ENCODE measurements at regions of chr3 and their contacts with region 1.

Region 1: GRCh38 chr3:129120254-129121004 is 1.2 kb downstream of the RAB43 start:
- DNase-seq: peak; percentile 90
- ATAC-seq: peak; percentile 31
- H3K4me3 ChIP-seq: peak overlapping the region; percentile 65 to 83 (median 81)
- H3K27ac ChIP-seq: peak overlapping the region; percentile 81
- H3K4me1 ChIP-seq: peaks cover 55% of the 10 kb centered on the region
- H3K27me3 ChIP-seq: no peaks in the 10 kb centered on the region; a peak in 1 of 5 replicates
- CTCF ChIP-seq: no peak; the same call in 1 of the 2 replicates
- EP300 ChIP-seq: peak in 1 of 2 experiments; percentile 26; a peak in 1 of 4 replicates
- POLR2A ChIP-seq: peak; percentile 49 to 63; a peak in 3 of 4 replicates
- RAD21 ChIP-seq: no peak

Region 2: GRCh38 chr3:127848131-127849129 is 1272.0 kb before region 1 on chr3:
- CTCF ChIA-PET with region 1: no interaction called
- POLR2A ChIA-PET with region 1: no interaction called
- in situ Hi-C with region 1: no loop called
- intact Hi-C with region 1: no loop called
- DNase-seq: no peak
- ATAC-seq: peak; percentile 55; the same call in 1 of the 3 replicates
- H3K4me3 ChIP-seq: no peak overlapping the region
- H3K27ac ChIP-seq: no peak overlapping the region
- H3K4me1 ChIP-seq: no peaks in the 10 kb centered on the region
- H3K27me3 ChIP-seq: peaks cover 0 to 14% of the 10 kb centered on the region in 2 experiments; a peak in 1 of 5 replicates
- CTCF ChIP-seq: no peak
- EP300 ChIP-seq: no peak
- POLR2A ChIP-seq: no peak
- RAD21 ChIP-seq: no peak

Region 3: DNA sequence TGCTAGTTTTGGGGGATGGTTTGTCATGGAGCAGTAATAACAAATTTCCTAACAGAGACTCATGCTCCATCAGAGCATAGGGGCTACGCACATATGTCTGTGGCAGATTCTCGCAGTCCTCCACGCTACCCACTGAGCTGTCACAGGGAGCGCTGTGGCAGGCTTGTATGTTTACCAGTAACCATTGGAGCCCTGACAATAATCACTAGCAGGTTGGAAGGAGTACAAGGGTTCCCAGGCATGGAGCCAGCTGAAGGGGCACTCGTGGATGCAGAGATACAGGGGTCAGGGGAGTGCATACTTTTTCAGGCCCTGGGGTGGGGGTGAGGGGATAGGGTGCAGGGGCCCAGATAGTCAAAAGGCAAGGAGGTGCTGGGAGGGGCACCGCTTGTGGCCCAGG is 67.8 kb before region 1 on chr3:
- CTCF ChIA-PET with region 1: no interaction called
- POLR2A ChIA-PET with region 1: interaction called, 10 read pairs
- in situ Hi-C with region 1: no loop called
- intact Hi-C with region 1: loop called (anchors 5 kb)
- DNase-seq: no peak
- ATAC-seq: no peak
- H3K4me3 ChIP-seq: no peak overlapping the region
- H3K27ac ChIP-seq: no peak overlapping the region
- H3K4me1 ChIP-seq: peaks cover 52% of the 10 kb centered on the region
- H3K27me3 ChIP-seq: 0 out of 5 replicates have a peak, but pooled peaks cover 0 to 9% of the 10 kb centered on the region in 2 experiments
- CTCF ChIP-seq: no peak
- EP300 ChIP-seq: no peak
- POLR2A ChIP-seq: no peak
- RAD21 ChIP-seq: no peak

Region 4: DNA sequence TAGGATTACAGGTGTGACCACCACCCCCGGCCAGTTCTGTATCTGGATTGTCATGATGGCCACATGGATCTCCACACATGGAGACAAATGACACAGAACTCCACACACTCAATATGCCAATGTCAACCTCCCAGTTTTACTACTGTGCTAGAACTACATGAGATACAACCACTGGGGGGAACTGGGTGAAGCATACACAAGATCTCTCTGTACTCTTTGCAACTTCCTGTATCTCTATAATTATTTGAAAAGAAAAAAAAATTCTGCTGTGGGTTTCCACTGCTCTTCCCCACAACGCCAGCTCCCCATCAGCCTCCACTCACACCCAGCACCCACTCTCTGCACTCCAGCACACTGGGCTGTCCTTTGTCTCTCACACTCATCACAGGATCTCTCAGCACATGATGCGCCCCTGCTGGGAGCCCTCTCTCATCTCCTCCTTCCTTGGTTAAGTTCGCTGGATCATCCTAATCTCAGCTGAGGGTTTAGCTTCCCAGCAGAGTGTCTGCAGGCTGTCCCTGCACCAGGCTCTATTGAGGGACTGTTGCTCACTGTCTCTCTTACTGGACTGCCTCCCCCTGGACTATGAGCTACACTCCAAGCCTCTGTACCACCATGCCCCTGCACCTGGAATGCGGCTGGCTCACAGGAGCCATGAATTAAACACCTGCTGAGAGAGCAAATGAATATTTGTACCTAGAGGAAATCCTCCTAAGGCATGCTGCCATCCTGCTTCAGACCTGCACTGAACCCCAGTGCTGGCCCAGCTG is 11.9 kb after region 1 on chr3:
- CTCF ChIA-PET with region 1: no interaction called
- POLR2A ChIA-PET with region 1: interaction called, 22 read pairs
- in situ Hi-C with region 1: no loop called
- intact Hi-C with region 1: no loop called
- DNase-seq: no peak
- ATAC-seq: 0 out of 3 replicates have a peak, but pooled peaks have one; percentile 23
- H3K4me3 ChIP-seq: no peak overlapping the region
- H3K27ac ChIP-seq: no peak overlapping the region
- H3K4me1 ChIP-seq: no peaks in the 10 kb centered on the region
- H3K27me3 ChIP-seq: no peaks in the 10 kb centered on the region
- CTCF ChIP-seq: no peak
- EP300 ChIP-seq: no peak
- POLR2A ChIP-seq: no peak
- RAD21 ChIP-seq: no peak

Region 5: DNA sequence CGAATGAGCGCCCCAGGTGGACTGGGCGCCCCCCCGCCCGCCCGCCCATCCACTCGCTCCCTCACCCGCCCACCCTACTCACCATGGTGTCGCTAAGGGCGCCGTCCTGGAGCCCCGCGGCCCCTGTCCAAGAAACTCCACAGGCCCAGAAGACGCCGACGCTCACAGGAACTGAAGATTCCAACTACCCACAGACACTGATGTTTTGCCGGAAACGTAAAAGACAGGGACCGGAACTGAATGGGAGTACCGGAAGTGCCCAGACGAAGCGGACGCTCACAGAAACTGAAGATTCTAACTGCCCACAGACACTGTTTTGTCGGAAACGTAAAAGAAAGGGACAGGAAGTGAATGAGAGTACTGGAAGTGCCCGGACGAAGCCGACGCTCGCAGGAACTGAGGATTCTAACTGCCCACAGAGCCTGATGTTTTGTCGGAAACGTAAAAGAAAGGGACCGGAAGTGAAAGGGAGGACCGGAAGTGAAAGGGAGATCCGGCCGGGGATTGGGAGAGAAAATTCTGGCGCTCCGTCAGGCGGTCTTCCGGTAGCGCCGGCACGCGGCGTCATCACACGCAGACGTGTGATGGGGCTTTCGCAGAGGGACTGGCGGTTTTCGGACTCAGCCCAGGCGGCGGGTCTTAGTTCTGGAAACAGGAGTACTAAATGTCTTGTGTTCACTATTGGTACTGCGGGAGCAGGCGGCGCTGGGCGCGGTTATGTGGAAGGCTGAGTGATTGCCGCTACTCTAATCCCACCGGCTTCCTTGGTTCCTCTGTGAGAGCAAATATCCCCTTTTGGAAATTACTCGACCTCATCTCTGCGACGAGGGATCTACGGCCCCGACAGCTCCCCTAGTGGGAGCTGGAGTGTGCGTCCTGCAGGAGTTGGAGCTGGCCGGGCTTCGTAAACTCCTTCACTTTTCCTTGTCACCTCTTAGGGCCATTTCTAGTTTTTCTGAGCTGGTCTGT is 40.7 kb after region 1 on chr3 and contains the start of gene ISY1:
- CTCF ChIA-PET with region 1: no interaction called
- POLR2A ChIA-PET with region 1: interaction called, 20 read pairs
- in situ Hi-C with region 1: no loop called
- intact Hi-C with region 1: no loop called
- DNase-seq: peak; percentile 92
- ATAC-seq: peak; percentile 82
- H3K4me3 ChIP-seq: peak within 1 kb of the TSS; percentile 91 to 99 (median 96)
- H3K27ac ChIP-seq: peak within 1 kb of the TSS; percentile 100
- H3K4me1 ChIP-seq: peaks cover 22% of the 10 kb centered on the region
- H3K27me3 ChIP-seq: no peaks in the 10 kb centered on the region; a peak in 1 of 5 replicates
- CTCF ChIP-seq: peak; percentile 65
- EP300 ChIP-seq: 0 out of 4 replicates have a peak, but pooled peaks of 1 of the 2 experiments have one; percentile 5
- POLR2A ChIP-seq: peak; percentile 82 to 94
- RAD21 ChIP-seq: peak; percentile 27; the same call in 1 of the 2 replicates
- total RNA-seq, gene ISY1: 39.1 and 59.0 TPM in 2 replicates

Region 6: GRCh38 chr3:129183569-129184395 is 63.4 kb after region 1 on chr3 and contains the start of gene CNBP:
- CTCF ChIA-PET with region 1: no interaction called
- POLR2A ChIA-PET with region 1: interaction called, 25 read pairs
- in situ Hi-C with region 1: no loop called
- intact Hi-C with region 1: loop called (anchors 5 kb)
- DNase-seq: peak; percentile 83
- ATAC-seq: peak; percentile 98
- H3K4me3 ChIP-seq: peak within 1 kb of the TSS; percentile 91 to 95 (median 95)
- H3K27ac ChIP-seq: peak within 1 kb of the TSS; percentile 99
- H3K4me1 ChIP-seq: peaks cover 40% of the 10 kb centered on the region
- H3K27me3 ChIP-seq: no peaks in the 10 kb centered on the region; a peak in 1 of 5 replicates
- CTCF ChIP-seq: no peak; the same call in 1 of the 2 replicates
- EP300 ChIP-seq: no peak; a peak in 1 of 4 replicates
- POLR2A ChIP-seq: peak; percentile 85 to 94
- RAD21 ChIP-seq: no peak; the same call in 1 of the 2 replicates
- total RNA-seq, gene CNBP: 354 and 539 TPM in 2 replicates

Region 7: GRCh38 chr3:129950318-129951046 is 830.1 kb after region 1 on chr3:
- CTCF ChIA-PET with region 1: no interaction called
- POLR2A ChIA-PET with region 1: no interaction called
- in situ Hi-C with region 1: no loop called
- intact Hi-C with region 1: no loop called
- DNase-seq: no peak
- ATAC-seq: no peak
- H3K4me3 ChIP-seq: no peak overlapping the region
- H3K27ac ChIP-seq: no peak overlapping the region
- H3K4me1 ChIP-seq: no peaks in the 10 kb centered on the region
- H3K27me3 ChIP-seq: peaks cover 3 to 28% of the 10 kb centered on the region in 2 experiments; a peak in 4 of 5 replicates
- CTCF ChIP-seq: no peak
- EP300 ChIP-seq: no peak
- POLR2A ChIP-seq: no peak
- RAD21 ChIP-seq: no peak